ENCODE measurements at regions of chr7 and their contacts with region 1.

Region 1: GRCh38 chr7:79063019-79063698 is 390.3 kb downstream of the MAGI2 start:
- DNase-seq: no peak
- H3K4me3 ChIP-seq: no peak overlapping the region
- H3K27ac ChIP-seq: no peak overlapping the region
- H3K4me1 ChIP-seq: no peaks in the 10 kb centered on the region
- H3K27me3 ChIP-seq: no peaks in the 10 kb centered on the region
- CTCF ChIP-seq: peak in 1 of 3 experiments; percentile 31; a peak in 1 of 4 replicates
- EP300 ChIP-seq: no peak
- POLR2A ChIP-seq: no peak
- RAD21 ChIP-seq: 0 out of 4 replicates have a peak, but pooled peaks of 1 of the 2 experiments have one; percentile 6

Region 2: GRCh38 chr7:79050603-79051002 is 12.6 kb before region 1 on chr7:
- CTCF ChIA-PET with region 1: interaction called, 14 read pairs
- POLR2A ChIA-PET with region 1: no interaction called
- DNase-seq: no peak
- H3K4me3 ChIP-seq: no peak overlapping the region
- H3K27ac ChIP-seq: no peak overlapping the region
- H3K4me1 ChIP-seq: no peaks in the 10 kb centered on the region
- H3K27me3 ChIP-seq: no peaks in the 10 kb centered on the region
- CTCF ChIP-seq: no peak
- EP300 ChIP-seq: no peak
- POLR2A ChIP-seq: no peak
- RAD21 ChIP-seq: no peak

Region 3: GRCh38 chr7:79078273-79078672 is 15.1 kb after region 1 on chr7:
- CTCF ChIA-PET with region 1: interaction called, 11 read pairs
- POLR2A ChIA-PET with region 1: no interaction called
- DNase-seq: no peak
- H3K4me3 ChIP-seq: no peak overlapping the region
- H3K27ac ChIP-seq: no peak overlapping the region
- H3K4me1 ChIP-seq: no peaks in the 10 kb centered on the region
- H3K27me3 ChIP-seq: no peaks in the 10 kb centered on the region
- CTCF ChIP-seq: no peak
- EP300 ChIP-seq: no peak
- POLR2A ChIP-seq: no peak
- RAD21 ChIP-seq: no peak

Measured in H1 (cell line).